SK-N-SH (cell line): ENCODE measurements at regions of chr13 and their contacts with region 1.

Region 1: DNA sequence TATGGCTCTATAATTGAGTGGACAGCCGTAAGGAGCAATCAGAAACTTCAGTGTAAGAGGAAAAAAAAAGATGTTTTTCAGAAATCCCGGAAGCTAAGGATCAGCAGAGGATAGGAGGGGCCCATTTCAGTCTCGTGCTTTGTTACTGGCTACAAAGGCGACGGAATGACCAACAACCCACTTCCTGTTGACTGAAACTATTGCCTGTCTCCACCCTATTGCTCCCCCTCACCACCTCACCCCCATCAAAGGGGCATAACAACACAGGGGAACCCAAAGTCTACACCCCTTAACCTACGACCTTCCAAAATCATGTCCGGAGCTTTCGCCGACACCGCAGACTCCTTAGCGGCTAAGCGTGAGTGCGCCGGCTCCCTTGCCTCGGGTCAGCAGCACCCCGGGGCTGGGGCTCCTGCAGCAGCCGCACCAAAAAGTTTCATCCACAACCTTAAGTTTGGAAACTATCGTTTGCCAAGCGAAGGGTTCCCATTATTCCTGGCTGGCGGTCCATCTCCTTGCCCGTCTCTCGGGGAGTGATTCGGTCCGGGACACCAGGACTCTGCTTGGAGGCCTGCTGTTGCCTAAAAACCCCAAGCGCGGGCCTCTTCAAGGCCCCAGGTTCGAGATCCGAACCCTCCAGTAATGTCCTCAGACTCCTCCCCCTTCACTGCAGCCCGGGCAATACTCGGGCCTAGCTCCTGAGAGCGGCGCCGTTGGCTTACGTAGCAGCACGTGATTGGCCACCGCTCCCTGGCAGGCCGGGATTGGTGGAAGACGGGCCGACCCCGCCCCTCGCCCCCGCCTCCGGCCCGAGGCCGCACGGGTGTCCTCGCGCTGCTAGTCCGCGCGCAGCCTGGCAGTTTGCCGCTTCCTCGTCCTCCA is at the start of gene TPP2:
- DNase-seq: peak; percentile 99
- H3K4me3 ChIP-seq: peak within 1 kb of the TSS; percentile 82 to 96
- H3K27ac ChIP-seq: peak within 1 kb of the TSS; percentile 94 to 97
- H3K4me1 ChIP-seq: peaks cover 11 to 25% of the 10 kb centered on the region in 2 experiments; a peak in 2 of 4 replicates
- H3K27me3 ChIP-seq: no peaks in the 10 kb centered on the region
- CTCF ChIP-seq: no peak
- EP300 ChIP-seq: no peak
- RAD21 ChIP-seq: no peak
- polyA plus RNA-seq, gene TPP2: 8.3 and 9.9 TPM in 2 replicates

Region 2: DNA sequence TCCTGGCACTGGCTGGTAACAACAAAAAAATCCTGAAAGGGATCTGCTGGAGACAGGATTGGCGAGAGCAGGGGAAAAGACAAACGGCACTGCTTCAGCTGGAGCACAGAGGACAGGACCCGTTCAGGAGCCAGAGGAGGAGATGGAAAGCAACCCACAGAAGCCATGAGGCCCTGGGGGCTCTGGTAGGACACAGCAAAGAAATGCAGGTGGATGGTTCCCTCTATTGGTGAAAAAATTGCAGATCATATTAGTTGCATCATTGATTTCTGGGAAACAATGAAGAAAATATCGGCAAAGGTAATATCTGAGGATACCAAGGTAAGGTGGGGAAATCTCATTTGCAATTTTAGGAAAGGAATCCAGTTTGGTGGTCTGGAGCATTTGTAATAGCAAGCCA is 25.3 kb before region 1 on chr13:
- CTCF ChIA-PET with region 1: interaction called, 12 read pairs
- POLR2A ChIA-PET with region 1: no interaction called
- DNase-seq: peak; percentile 37
- H3K4me3 ChIP-seq: no peak overlapping the region
- H3K27ac ChIP-seq: no peak overlapping the region
- H3K4me1 ChIP-seq: peaks cover 0 to 12% of the 10 kb centered on the region in 2 experiments; a peak in 2 of 4 replicates
- H3K27me3 ChIP-seq: 0 out of 2 replicates have a peak, but pooled peaks cover 5% of the 10 kb centered on the region
- CTCF ChIP-seq: no peak
- EP300 ChIP-seq: no peak
- RAD21 ChIP-seq: peak; percentile 73

Region 3: GRCh38 chr13:102580552-102581169 is 15.7 kb before region 1 on chr13:
- CTCF ChIA-PET with region 1: interaction called, 59 read pairs
- POLR2A ChIA-PET with region 1: interaction called, 3 read pairs
- DNase-seq: peak; percentile 54
- H3K4me3 ChIP-seq: no peak overlapping the region; a peak in 1 of 4 replicates
- H3K27ac ChIP-seq: no peak overlapping the region
- H3K4me1 ChIP-seq: no peaks in the 10 kb centered on the region
- H3K27me3 ChIP-seq: no peaks in the 10 kb centered on the region
- CTCF ChIP-seq: peak; percentile 84
- EP300 ChIP-seq: no peak
- RAD21 ChIP-seq: peak; percentile 92

Region 4: GRCh38 chr13:102700083-102701001 is 104.0 kb after region 1 on chr13:
- CTCF ChIA-PET with region 1: no interaction called
- POLR2A ChIA-PET with region 1: no interaction called
- DNase-seq: no peak
- H3K4me3 ChIP-seq: no peak overlapping the region
- H3K27ac ChIP-seq: peak overlapping the region in 1 of 2 experiments; percentile 63; a peak in 2 of 4 replicates
- H3K4me1 ChIP-seq: peaks cover 8 to 13% of the 10 kb centered on the region in 2 experiments; a peak in 3 of 4 replicates
- H3K27me3 ChIP-seq: no peaks in the 10 kb centered on the region
- CTCF ChIP-seq: no peak
- EP300 ChIP-seq: no peak
- RAD21 ChIP-seq: no peak

Region 5: GRCh38 chr13:102724923-102725322 is 128.5 kb after region 1 on chr13:
- CTCF ChIA-PET with region 1: interaction called, 23 read pairs
- POLR2A ChIA-PET with region 1: interaction called, 7 read pairs
- DNase-seq: peak; percentile 29
- H3K4me3 ChIP-seq: no peak overlapping the region
- H3K27ac ChIP-seq: no peak overlapping the region
- H3K4me1 ChIP-seq: no peaks in the 10 kb centered on the region; a peak in 1 of 4 replicates
- H3K27me3 ChIP-seq: no peaks in the 10 kb centered on the region
- CTCF ChIP-seq: peak; percentile 67
- EP300 ChIP-seq: no peak
- RAD21 ChIP-seq: peak; percentile 85

Region 6: GRCh38 chr13:102769679-102770078 is 173.3 kb after region 1 on chr13:
- CTCF ChIA-PET with region 1: interaction called, 17 read pairs
- POLR2A ChIA-PET with region 1: no interaction called
- DNase-seq: peak; percentile 20
- H3K4me3 ChIP-seq: no peak overlapping the region
- H3K27ac ChIP-seq: no peak overlapping the region
- H3K4me1 ChIP-seq: peaks cover 0 to 16% of the 10 kb centered on the region in 2 experiments; a peak in 2 of 4 replicates
- H3K27me3 ChIP-seq: no peaks in the 10 kb centered on the region
- CTCF ChIP-seq: peak; percentile 28; the same call in 1 of the 2 replicates
- EP300 ChIP-seq: no peak
- RAD21 ChIP-seq: peak; percentile 56

Region 7: GRCh38 chr13:102800145-102801041 is 204.0 kb after region 1 on chr13:
- CTCF ChIA-PET with region 1: interaction called, 19 read pairs
- POLR2A ChIA-PET with region 1: interaction called, 4 read pairs
- DNase-seq: peak; percentile 95
- H3K4me3 ChIP-seq: peak overlapping the region; percentile 81 to 86
- H3K27ac ChIP-seq: peak overlapping the region; percentile 61 to 79
- H3K4me1 ChIP-seq: peaks cover 0 to 8% of the 10 kb centered on the region in 2 experiments; a peak in 2 of 4 replicates
- H3K27me3 ChIP-seq: no peaks in the 10 kb centered on the region
- CTCF ChIP-seq: peak; percentile 73
- EP300 ChIP-seq: no peak
- RAD21 ChIP-seq: peak; percentile 33; the same call in 1 of the 2 replicates

Region 8: GRCh38 chr13:102845630-102846260 is 249.4 kb after region 1 on chr13 and contains the start of gene ERCC5:
- CTCF ChIA-PET with region 1: interaction called, 38 read pairs
- POLR2A ChIA-PET with region 1: interaction called, 20 read pairs
- DNase-seq: peak; percentile 81
- H3K4me3 ChIP-seq: peak within 1 kb of the TSS; percentile 96 to 99
- H3K27ac ChIP-seq: peak within 1 kb of the TSS; percentile 87 to 96
- H3K4me1 ChIP-seq: peaks cover 0 to 12% of the 10 kb centered on the region in 2 experiments; a peak in 3 of 4 replicates
- H3K27me3 ChIP-seq: no peaks in the 10 kb centered on the region
- CTCF ChIP-seq: no peak
- EP300 ChIP-seq: peak; percentile 31 to 45; a peak in 1 of 4 replicates
- RAD21 ChIP-seq: peak; percentile 27; the same call in 1 of the 2 replicates
- polyA plus RNA-seq, gene ERCC5: 14.1 and 19.0 TPM in 2 replicates